Activated CD4-positive, alpha-beta memory T cell treated with anti-CD3 and anti-CD28 coated beads for 36 hours (primary cell): ENCODE measurements at regions of chr3 and their contacts with region 1.

Region 1: GRCh38 chr3:31077021-31077601 is 182.7 kb upstream of the GADL1 start:
- DNase-seq: peak; percentile 73
- H3K4me3 Mint-ChIP-seq: no peak overlapping the region
- H3K27ac Mint-ChIP-seq: peak overlapping the region; percentile 1
- H3K4me1 Mint-ChIP-seq: peaks cover 18% of the 10 kb centered on the region
- H3K27me3 Mint-ChIP-seq: no peaks in the 10 kb centered on the region

Region 2: DNA sequence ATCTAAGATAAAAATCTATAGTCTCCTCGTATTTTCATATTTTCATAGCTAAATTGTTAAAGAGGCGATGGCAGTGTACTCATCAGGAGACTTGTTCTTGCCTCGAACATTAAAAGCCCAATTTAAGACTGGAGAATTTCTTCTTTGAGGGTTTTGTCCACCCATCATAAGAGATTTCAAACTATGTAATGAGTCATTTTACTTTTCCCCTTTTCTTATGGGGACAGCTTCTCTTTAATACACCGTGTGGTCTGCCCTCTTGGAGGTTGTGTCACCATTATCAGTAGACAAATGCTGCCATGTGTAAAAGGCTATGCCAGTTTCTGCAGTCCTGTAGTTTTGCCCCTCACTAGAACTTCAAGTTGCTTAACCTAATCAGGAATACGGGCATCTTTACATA is 453.8 kb before region 1 on chr3:
- CTCF ChIA-PET with region 1: no interaction called
- POLR2A ChIA-PET with region 1: no interaction called
- intact Hi-C with region 1: loop called (anchors 5 kb)
- DNase-seq: no peak
- H3K4me3 Mint-ChIP-seq: peak overlapping the region; percentile 59
- H3K27ac Mint-ChIP-seq: peak overlapping the region; percentile 96
- H3K4me1 Mint-ChIP-seq: peaks cover 91% of the 10 kb centered on the region
- H3K27me3 Mint-ChIP-seq: no peaks in the 10 kb centered on the region

Region 3: DNA sequence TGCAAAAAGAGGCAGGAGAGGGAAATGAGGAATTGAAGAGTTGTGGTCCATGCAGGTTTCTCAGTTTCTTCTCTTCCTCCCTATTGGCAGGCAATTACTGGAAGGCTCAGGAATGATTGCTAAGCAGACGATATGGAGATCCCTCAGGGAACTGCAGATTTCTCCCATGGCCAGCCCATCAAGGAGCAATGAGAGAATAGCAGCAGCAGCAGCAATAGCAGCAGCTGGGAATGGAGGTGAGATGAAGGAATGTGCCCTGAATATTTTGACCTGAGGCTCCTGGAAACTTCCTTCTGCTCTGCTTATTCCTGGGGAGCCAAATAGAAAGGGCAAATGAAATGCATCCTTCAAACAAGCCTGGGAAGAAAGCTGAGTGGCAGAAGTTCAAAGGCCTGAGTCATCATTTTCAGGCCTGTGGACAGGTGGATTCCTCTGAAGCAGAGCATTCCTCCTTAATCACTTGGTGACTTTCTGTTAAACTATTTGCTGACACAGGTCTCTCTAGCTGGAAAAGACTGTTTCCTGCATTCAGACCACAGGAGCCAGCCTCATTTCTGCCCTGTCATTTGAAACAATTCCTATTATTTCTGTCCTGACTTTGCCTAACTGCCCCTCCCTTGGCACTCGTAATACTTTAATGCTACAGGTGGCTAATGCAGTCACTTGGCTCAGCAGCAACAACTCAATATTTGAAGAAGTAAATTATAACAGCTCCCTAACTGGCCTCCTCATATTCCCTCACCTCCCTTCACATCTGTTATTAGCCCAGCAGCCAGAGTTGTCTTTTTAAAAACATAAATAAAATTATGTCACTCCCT is 35.7 kb before region 1 on chr3:
- CTCF ChIA-PET with region 1: no interaction called
- POLR2A ChIA-PET with region 1: no interaction called
- intact Hi-C with region 1: no loop called
- DNase-seq: no peak
- H3K4me3 Mint-ChIP-seq: no peak overlapping the region
- H3K27ac Mint-ChIP-seq: no peak overlapping the region
- H3K4me1 Mint-ChIP-seq: no peaks in the 10 kb centered on the region
- H3K27me3 Mint-ChIP-seq: no peaks in the 10 kb centered on the region

Region 4: GRCh38 chr3:31105438-31106077 is 28.4 kb after region 1 on chr3:
- CTCF ChIA-PET with region 1: no interaction called
- POLR2A ChIA-PET with region 1: interaction called, 12 read pairs
- intact Hi-C with region 1: loop called (anchors 1 kb)
- DNase-seq: peak; percentile 51
- H3K4me3 Mint-ChIP-seq: no peak overlapping the region
- H3K27ac Mint-ChIP-seq: no peak overlapping the region
- H3K4me1 Mint-ChIP-seq: peaks cover 37% of the 10 kb centered on the region
- H3K27me3 Mint-ChIP-seq: no peaks in the 10 kb centered on the region

Region 5: GRCh38 chr3:31116651-31117050 is 39.5 kb after region 1 on chr3:
- CTCF ChIA-PET with region 1: no interaction called
- POLR2A ChIA-PET with region 1: no interaction called
- intact Hi-C with region 1: no loop called
- DNase-seq: no peak
- H3K4me3 Mint-ChIP-seq: no peak overlapping the region
- H3K27ac Mint-ChIP-seq: no peak overlapping the region
- H3K4me1 Mint-ChIP-seq: no peaks in the 10 kb centered on the region
- H3K27me3 Mint-ChIP-seq: no peaks in the 10 kb centered on the region

Region 6: GRCh38 chr3:31777092-31777491 is 700.0 kb after region 1 on chr3:
- CTCF ChIA-PET with region 1: no interaction called
- POLR2A ChIA-PET with region 1: no interaction called
- intact Hi-C with region 1: loop called (anchors 10 kb)
- DNase-seq: no peak
- H3K4me3 Mint-ChIP-seq: no peak overlapping the region
- H3K27ac Mint-ChIP-seq: no peak overlapping the region
- H3K4me1 Mint-ChIP-seq: peaks cover 27% of the 10 kb centered on the region
- H3K27me3 Mint-ChIP-seq: peaks cover 29% of the 10 kb centered on the region